ENCODE measurements at regions of chr17 and their contacts with region 1.

Region 1: GRCh38 chr17:5309851-5310250 is 27.8 kb downstream of the RABEP1 start:
- DNase-seq: no peak
- ATAC-seq: no peak
- H3K4me3 ChIP-seq: no peak overlapping the region
- H3K27ac ChIP-seq: no peak overlapping the region
- H3K4me1 ChIP-seq: peaks cover 0 to 1% of the 10 kb centered on the region in 2 donors
- H3K27me3 ChIP-seq: no peaks in the 10 kb centered on the region

Region 2: GRCh38 chr17:5237541-5238016 is 72.3 kb before region 1 on chr17:
- intact Hi-C with region 1: loop called in 1 of 2 experiments (anchors 10 kb)
- DNase-seq: peak in 1 of 2 donors; percentile 71
- ATAC-seq: peak; percentile 59
- H3K4me3 ChIP-seq: no peak overlapping the region
- H3K27ac ChIP-seq: no peak overlapping the region
- H3K4me1 ChIP-seq: no peaks in the 10 kb centered on the region
- H3K27me3 ChIP-seq: no peaks in the 10 kb centered on the region

Region 3: GRCh38 chr17:5272322-5272721 is 37.5 kb before region 1 on chr17:
- intact Hi-C with region 1: no loop called
- DNase-seq: no peak
- ATAC-seq: no peak
- H3K4me3 ChIP-seq: no peak overlapping the region
- H3K27ac ChIP-seq: no peak overlapping the region
- H3K4me1 ChIP-seq: no peaks in the 10 kb centered on the region
- H3K27me3 ChIP-seq: no peaks in the 10 kb centered on the region

Region 4: GRCh38 chr17:5355421-5356129 is 45.7 kb after region 1 on chr17:
- intact Hi-C with region 1: no loop called
- DNase-seq: no peak
- ATAC-seq: peak; percentile 63
- H3K4me3 ChIP-seq: no peak overlapping the region
- H3K27ac ChIP-seq: peak overlapping the region; percentile 64 to 95
- H3K4me1 ChIP-seq: no peaks in the 10 kb centered on the region
- H3K27me3 ChIP-seq: no peaks in the 10 kb centered on the region

Measured in aorta (tissue), 5 donors.